Activated CD4-positive, alpha-beta memory T cell treated with anti-CD3 and anti-CD28 coated beads, Interleukin-2, amount 10 ng/mL, durations not matched to agents 7 days and 5 days (primary cell): ENCODE measurements at regions of chr6 and their contacts with region 1.

Region 1: GRCh38 chr6:27809939-27810767 is 102.0 kb downstream of the OR2B2 start:
- DNase-seq: peak; percentile 83
- H3K4me3 Mint-ChIP-seq: peak overlapping the region; percentile 85
- H3K27ac Mint-ChIP-seq: peak overlapping the region; percentile 99
- H3K4me1 Mint-ChIP-seq: peaks cover 62% of the 10 kb centered on the region
- H3K27me3 Mint-ChIP-seq: no peaks in the 10 kb centered on the region

Region 2: DNA sequence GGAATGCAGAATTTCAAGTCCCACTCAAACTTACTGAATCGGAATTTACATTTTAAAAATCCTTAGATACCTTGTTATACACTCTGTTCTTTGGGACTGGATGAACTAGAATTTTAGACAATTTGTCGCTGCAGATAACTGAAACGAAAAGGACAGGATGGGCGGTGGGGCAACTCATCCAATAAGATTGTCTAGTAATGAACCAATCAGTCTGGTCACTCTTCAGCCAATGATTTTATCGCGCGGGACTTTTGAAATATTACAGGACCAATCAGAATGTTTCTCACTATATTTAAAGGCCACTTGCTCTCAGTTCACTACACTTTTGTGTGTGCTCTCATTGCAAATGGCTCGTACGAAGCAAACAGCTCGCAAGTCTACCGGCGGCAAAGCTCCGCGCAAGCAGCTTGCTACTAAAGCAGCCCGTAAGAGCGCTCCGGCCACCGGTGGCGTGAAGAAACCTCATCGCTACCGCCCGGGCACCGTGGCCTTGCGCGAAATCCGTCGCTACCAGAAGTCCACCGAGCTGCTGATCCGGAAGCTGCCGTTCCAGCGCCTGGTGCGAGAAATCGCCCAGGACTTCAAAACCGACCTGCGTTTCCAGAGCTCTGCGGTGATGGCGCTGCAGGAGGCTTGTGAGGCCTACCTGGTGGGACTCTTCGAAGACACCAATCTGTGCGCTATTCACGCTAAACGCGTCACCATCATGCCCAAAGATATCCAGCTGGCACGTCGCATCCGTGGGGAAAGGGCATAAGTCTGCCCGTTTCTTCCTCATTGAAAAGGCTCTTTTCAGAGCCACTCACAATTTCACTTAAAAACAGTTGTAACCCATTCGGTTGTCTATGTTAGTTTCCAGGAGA is 1764.9 kb before region 1 on chr6:
- CTCF ChIA-PET with region 1: no interaction called
- POLR2A ChIA-PET with region 1: interaction called, 41 read pairs
- DNase-seq: peak; percentile 82
- H3K4me3 Mint-ChIP-seq: peak overlapping the region; percentile 79
- H3K27ac Mint-ChIP-seq: peak overlapping the region; percentile 99
- H3K4me1 Mint-ChIP-seq: peaks cover 44% of the 10 kb centered on the region
- H3K27me3 Mint-ChIP-seq: no peaks in the 10 kb centered on the region

Region 3: GRCh38 chr6:26216356-26216885 is 1593.7 kb before region 1 on chr6:
- CTCF ChIA-PET with region 1: no interaction called
- POLR2A ChIA-PET with region 1: interaction called, 16 read pairs
- DNase-seq: peak; percentile 90
- H3K4me3 Mint-ChIP-seq: no peak overlapping the region
- H3K27ac Mint-ChIP-seq: no peak overlapping the region
- H3K4me1 Mint-ChIP-seq: peaks cover 28% of the 10 kb centered on the region
- H3K27me3 Mint-ChIP-seq: no peaks in the 10 kb centered on the region

Region 4: DNA sequence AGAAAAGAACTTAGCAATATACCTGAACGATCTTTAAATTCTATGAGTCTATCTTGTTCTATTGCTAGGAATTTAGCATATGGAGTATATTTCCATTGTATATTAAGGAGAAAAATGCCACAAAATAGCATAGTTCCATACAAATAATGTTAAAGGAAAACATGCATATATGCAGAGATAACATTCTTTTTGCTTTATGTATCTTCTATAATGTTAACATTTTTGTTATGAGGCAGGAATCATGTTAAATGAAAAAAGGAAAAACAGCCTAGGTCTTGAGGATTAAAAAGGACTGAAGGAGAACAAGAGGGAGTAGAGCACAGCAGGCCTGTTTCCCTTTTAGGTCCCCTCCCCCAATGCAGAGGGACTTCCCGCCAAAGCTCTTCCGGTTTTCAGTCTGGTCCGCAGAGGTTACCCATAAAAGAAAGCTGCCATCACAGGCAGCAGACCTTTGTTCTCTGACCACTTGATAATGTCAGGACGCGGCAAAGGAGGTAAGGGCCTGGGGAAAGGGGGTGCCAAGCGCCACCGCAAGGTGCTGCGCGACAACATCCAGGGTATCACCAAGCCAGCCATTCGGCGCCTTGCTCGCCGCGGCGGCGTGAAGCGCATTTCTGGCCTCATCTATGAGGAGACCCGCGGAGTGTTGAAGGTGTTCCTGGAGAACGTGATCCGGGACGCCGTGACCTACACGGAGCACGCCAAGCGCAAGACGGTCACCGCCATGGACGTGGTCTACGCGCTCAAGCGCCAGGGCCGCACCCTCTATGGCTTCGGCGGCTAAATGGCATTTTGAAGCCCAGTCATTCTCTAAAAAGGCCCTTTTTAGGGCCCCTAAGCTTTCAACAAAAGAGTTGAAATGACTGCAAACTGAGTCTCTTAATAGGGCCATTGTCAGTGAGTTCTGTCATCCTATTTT is 671.1 kb before region 1 on chr6:
- CTCF ChIA-PET with region 1: no interaction called
- POLR2A ChIA-PET with region 1: interaction called, 440 read pairs
- DNase-seq: peak; percentile 80
- H3K4me3 Mint-ChIP-seq: peak overlapping the region; percentile 91
- H3K27ac Mint-ChIP-seq: peak overlapping the region; percentile 98
- H3K4me1 Mint-ChIP-seq: peaks cover 67% of the 10 kb centered on the region
- H3K27me3 Mint-ChIP-seq: no peaks in the 10 kb centered on the region

Region 5: DNA sequence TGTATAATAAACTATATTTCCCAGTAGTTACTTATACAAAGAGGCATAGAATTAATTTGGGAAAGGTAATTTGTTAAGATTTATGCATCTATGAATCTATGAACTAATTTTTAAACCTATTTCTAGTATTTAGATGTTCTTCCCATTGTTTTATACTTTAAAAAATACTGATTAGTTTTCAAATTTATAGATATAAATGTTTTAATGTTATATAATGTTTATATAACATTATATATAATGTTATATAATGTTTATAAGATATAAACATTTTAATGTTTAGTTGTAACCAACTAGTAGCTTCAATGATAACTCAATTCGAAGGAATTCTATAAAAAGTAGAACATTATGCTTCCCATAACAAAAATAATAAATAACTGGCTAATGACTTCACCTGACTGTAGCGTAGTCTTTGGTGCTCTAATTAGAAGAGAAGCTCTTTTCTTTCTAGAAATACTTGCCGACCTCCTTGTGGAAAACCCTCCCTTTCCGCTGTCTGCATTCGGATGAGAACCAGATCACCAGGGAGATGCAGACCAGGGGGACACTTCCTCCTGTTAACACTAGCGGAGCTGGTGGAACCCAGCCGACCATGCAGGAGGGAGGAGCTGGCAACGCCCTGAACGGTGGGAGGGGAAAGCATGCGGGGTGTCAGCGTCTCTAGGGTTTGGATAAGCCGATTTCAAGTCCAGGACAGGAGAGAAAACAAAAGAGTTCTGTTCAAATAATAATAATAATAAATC is 56.3 kb before region 1 on chr6:
- CTCF ChIA-PET with region 1: interaction called, 4 read pairs
- POLR2A ChIA-PET with region 1: interaction called, 40 read pairs
- DNase-seq: peak; percentile 80
- H3K4me3 Mint-ChIP-seq: peak overlapping the region; percentile 73
- H3K27ac Mint-ChIP-seq: peak overlapping the region; percentile 100
- H3K4me1 Mint-ChIP-seq: peaks cover 48% of the 10 kb centered on the region
- H3K27me3 Mint-ChIP-seq: peaks cover 5% of the 10 kb centered on the region

Region 6: GRCh38 chr6:27871924-27872638 is 61.9 kb after region 1 on chr6:
- CTCF ChIA-PET with region 1: interaction called, 21 read pairs
- POLR2A ChIA-PET with region 1: interaction called, 1,218 read pairs
- DNase-seq: peak; percentile 87
- H3K4me3 Mint-ChIP-seq: peak overlapping the region; percentile 81
- H3K27ac Mint-ChIP-seq: peak overlapping the region; percentile 99
- H3K4me1 Mint-ChIP-seq: peaks cover 60% of the 10 kb centered on the region
- H3K27me3 Mint-ChIP-seq: no peaks in the 10 kb centered on the region

Region 7: DNA sequence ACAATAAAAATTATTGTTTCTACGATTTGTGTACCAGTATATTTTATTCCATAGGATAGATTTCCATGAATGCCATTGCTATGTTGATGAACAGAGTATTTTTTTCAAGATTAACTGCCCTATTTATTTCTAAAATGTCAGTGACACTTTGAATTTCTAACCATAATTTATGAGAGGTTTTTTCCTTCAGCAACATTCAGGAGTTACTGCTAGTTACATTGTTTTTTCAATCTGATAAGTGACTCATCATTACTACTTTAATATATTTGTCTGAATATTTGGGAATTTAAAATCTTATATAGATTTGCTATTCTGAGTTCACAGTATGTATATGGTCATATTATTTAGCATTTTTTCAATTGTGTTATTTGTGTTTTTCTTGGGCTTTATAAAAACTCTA is 140.9 kb after region 1 on chr6:
- CTCF ChIA-PET with region 1: no interaction called
- POLR2A ChIA-PET with region 1: no interaction called
- DNase-seq: no peak
- H3K4me3 Mint-ChIP-seq: no peak overlapping the region
- H3K27ac Mint-ChIP-seq: no peak overlapping the region
- H3K4me1 Mint-ChIP-seq: no peaks in the 10 kb centered on the region
- H3K27me3 Mint-ChIP-seq: peaks cover 30% of the 10 kb centered on the region

Region 8: DNA sequence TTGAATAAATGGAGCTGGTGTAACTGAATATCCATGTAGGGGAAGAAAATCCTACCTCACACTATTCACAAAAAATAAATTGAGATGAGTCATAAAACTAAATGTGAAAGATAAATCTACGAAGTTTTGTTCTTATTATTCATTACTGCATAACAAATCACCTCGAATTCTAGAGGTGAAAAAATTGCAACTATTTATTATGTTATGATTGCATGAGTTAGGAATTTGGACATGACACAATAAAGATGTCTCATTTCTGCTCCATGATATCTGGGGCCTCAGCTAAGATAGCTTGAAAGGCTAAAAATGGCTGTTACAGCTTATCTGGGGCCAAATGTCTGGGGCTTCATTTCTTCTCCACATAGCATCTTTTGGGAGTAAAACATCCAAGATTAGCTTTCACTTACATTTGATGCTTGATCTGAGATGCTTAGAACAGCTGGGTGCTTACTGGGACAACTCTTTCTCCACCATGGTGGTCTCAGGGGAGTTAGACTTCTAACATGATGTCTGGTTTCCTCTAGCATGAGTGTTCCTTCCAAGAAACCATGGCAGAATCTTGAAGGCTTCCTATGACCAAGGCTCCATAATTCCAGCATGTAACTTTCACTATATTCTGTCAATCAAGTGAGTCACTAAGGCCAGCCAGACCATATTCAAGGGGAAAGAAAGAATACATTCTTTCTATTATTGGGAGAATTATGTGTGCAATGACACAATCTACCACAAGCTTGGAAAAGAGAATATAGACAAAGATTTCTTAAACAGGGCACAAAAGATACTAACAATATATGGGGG is 177.0 kb after region 1 on chr6:
- CTCF ChIA-PET with region 1: no interaction called
- POLR2A ChIA-PET with region 1: no interaction called
- DNase-seq: no peak
- H3K4me3 Mint-ChIP-seq: no peak overlapping the region
- H3K27ac Mint-ChIP-seq: no peak overlapping the region
- H3K4me1 Mint-ChIP-seq: no peaks in the 10 kb centered on the region
- H3K27me3 Mint-ChIP-seq: peaks cover 33% of the 10 kb centered on the region